Naive thymus-derived CD4-positive, alpha-beta T cell (primary cell): ENCODE measurements at regions of chr4 and their contacts with region 1.

Region 1: GRCh38 chr4:25312496-25313200 is at the start of gene ZCCHC4:
- DNase-seq: peak; percentile 83 to 99 (median 92)
- ATAC-seq: peak; percentile 100
- H3K4me3 ChIP-seq: peak within 1 kb of the TSS; percentile 80
- H3K4me3 Mint-ChIP-seq: peak within 1 kb of the TSS; percentile 91 to 100 (median 98)
- H3K27ac ChIP-seq: peak within 1 kb of the TSS; percentile 71
- H3K27ac Mint-ChIP-seq: peak within 1 kb of the TSS; percentile 90 to 98 (median 95)
- H3K4me1 ChIP-seq: peaks cover 5 to 7% of the 10 kb centered on the region in 2 donors
- H3K4me1 Mint-ChIP-seq: peaks cover 11 to 34% (median 29%) of the 10 kb centered on the region in 7 donors
- H3K27me3 ChIP-seq: no peaks in the 10 kb centered on the region
- H3K27me3 Mint-ChIP-seq: peaks cover 0 to 10% (median 4%) of the 10 kb centered on the region in 5 donors
- total RNA-seq, gene ZCCHC4: 9.5 to 15.5 (median 13.6) TPM

Region 2: GRCh38 chr4:25180524-25181131 is 132.0 kb before region 1 on chr4:
- CTCF ChIA-PET with region 1: interaction called, 3 read pairs
- POLR2A ChIA-PET with region 1: interaction called, 7 read pairs
- intact Hi-C with region 1: loop called in 1 of 2 experiments (anchors 1 kb)
- DNase-seq: peak in 5 of 9 donors; percentile 14 to 39 (median 26)
- ATAC-seq: peak; percentile 80
- H3K4me3 ChIP-seq: no peak overlapping the region
- H3K4me3 Mint-ChIP-seq: no peak overlapping the region
- H3K27ac ChIP-seq: no peak overlapping the region
- H3K27ac Mint-ChIP-seq: no peak overlapping the region
- H3K4me1 ChIP-seq: peaks cover 4 to 16% of the 10 kb centered on the region in 2 donors
- H3K4me1 Mint-ChIP-seq: peaks cover 22 to 63% (median 47%) of the 10 kb centered on the region in 7 donors
- H3K27me3 ChIP-seq: no peaks in the 10 kb centered on the region
- H3K27me3 Mint-ChIP-seq: no peaks in the 10 kb centered on the region

Region 3: GRCh38 chr4:25367004-25367621 is 54.5 kb after region 1 on chr4:
- CTCF ChIA-PET with region 1: no interaction called
- POLR2A ChIA-PET with region 1: no interaction called
- intact Hi-C with region 1: loop called (anchors 1 to 2 kb)
- DNase-seq: peak in 5 of 9 donors; percentile 18 to 37 (median 26)
- ATAC-seq: no peak
- H3K4me3 ChIP-seq: no peak overlapping the region
- H3K4me3 Mint-ChIP-seq: no peak overlapping the region
- H3K27ac ChIP-seq: no peak overlapping the region
- H3K27ac Mint-ChIP-seq: no peak overlapping the region
- H3K4me1 ChIP-seq: no peaks in the 10 kb centered on the region
- H3K4me1 Mint-ChIP-seq: no peaks in the 10 kb centered on the region
- H3K27me3 ChIP-seq: no peaks in the 10 kb centered on the region
- H3K27me3 Mint-ChIP-seq: no peaks in the 10 kb centered on the region

Region 4: DNA sequence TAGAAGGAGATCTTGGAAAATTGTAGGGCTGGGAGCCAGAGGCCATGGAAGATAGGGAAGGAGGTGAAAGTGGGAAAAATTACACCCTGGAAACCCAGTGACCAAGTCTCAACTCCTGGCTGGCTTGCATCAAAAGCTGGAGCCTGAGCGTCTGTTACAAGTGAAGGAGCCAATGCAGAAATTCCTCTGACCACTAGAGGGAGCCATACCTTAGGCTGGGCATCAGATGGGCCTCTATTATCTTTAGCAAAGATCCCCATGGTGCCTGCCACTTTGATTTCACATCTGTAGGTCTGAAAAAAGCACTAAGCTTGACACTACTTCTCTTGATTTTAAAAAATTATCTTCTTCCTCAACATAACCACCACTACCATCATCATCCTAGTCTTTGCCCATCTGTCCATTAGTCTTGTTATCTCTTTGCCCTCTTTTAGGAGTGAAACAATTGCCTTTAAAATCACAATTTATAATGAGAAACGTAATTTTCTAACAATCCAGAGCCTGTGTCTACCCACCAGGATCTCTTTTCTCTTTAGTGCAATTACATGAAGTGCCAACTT is 127.3 kb after region 1 on chr4:
- CTCF ChIA-PET with region 1: no interaction called
- POLR2A ChIA-PET with region 1: no interaction called
- intact Hi-C with region 1: no loop called
- DNase-seq: peak in 7 of 9 donors; percentile 18 to 44 (median 27)
- ATAC-seq: peak; percentile 72
- H3K4me3 ChIP-seq: no peak overlapping the region
- H3K4me3 Mint-ChIP-seq: no peak overlapping the region
- H3K27ac ChIP-seq: no peak overlapping the region
- H3K27ac Mint-ChIP-seq: no peak overlapping the region
- H3K4me1 ChIP-seq: no peaks in the 10 kb centered on the region
- H3K4me1 Mint-ChIP-seq: peaks cover 0 to 7% (median 0%) of the 10 kb centered on the region in 7 donors
- H3K27me3 ChIP-seq: no peaks in the 10 kb centered on the region
- H3K27me3 Mint-ChIP-seq: no peaks in the 10 kb centered on the region

Region 5: GRCh38 chr4:25489253-25489797 is 176.7 kb after region 1 on chr4:
- CTCF ChIA-PET with region 1: no interaction called
- POLR2A ChIA-PET with region 1: no interaction called
- intact Hi-C with region 1: no loop called
- DNase-seq: no peak
- ATAC-seq: no peak
- H3K4me3 ChIP-seq: no peak overlapping the region
- H3K4me3 Mint-ChIP-seq: no peak overlapping the region
- H3K27ac ChIP-seq: no peak overlapping the region
- H3K27ac Mint-ChIP-seq: no peak overlapping the region
- H3K4me1 ChIP-seq: no peaks in the 10 kb centered on the region
- H3K4me1 Mint-ChIP-seq: no peaks in the 10 kb centered on the region
- H3K27me3 ChIP-seq: no peaks in the 10 kb centered on the region
- H3K27me3 Mint-ChIP-seq: peaks cover 0 to 19% (median 12%) of the 10 kb centered on the region in 5 donors

Region 6: GRCh38 chr4:25852103-25852502 is 539.5 kb after region 1 on chr4:
- CTCF ChIA-PET with region 1: no interaction called
- POLR2A ChIA-PET with region 1: no interaction called
- intact Hi-C with region 1: no loop called
- DNase-seq: no peak
- ATAC-seq: no peak
- H3K4me3 ChIP-seq: no peak overlapping the region
- H3K4me3 Mint-ChIP-seq: no peak overlapping the region
- H3K27ac ChIP-seq: no peak overlapping the region
- H3K27ac Mint-ChIP-seq: peak overlapping the region in 1 of 9 donors; percentile 65
- H3K4me1 ChIP-seq: peaks cover 12 to 22% of the 10 kb centered on the region in 2 donors
- H3K4me1 Mint-ChIP-seq: peaks cover 40 to 64% (median 52%) of the 10 kb centered on the region in 7 donors
- H3K27me3 ChIP-seq: no peaks in the 10 kb centered on the region
- H3K27me3 Mint-ChIP-seq: no peaks in the 10 kb centered on the region

Region 7: DNA sequence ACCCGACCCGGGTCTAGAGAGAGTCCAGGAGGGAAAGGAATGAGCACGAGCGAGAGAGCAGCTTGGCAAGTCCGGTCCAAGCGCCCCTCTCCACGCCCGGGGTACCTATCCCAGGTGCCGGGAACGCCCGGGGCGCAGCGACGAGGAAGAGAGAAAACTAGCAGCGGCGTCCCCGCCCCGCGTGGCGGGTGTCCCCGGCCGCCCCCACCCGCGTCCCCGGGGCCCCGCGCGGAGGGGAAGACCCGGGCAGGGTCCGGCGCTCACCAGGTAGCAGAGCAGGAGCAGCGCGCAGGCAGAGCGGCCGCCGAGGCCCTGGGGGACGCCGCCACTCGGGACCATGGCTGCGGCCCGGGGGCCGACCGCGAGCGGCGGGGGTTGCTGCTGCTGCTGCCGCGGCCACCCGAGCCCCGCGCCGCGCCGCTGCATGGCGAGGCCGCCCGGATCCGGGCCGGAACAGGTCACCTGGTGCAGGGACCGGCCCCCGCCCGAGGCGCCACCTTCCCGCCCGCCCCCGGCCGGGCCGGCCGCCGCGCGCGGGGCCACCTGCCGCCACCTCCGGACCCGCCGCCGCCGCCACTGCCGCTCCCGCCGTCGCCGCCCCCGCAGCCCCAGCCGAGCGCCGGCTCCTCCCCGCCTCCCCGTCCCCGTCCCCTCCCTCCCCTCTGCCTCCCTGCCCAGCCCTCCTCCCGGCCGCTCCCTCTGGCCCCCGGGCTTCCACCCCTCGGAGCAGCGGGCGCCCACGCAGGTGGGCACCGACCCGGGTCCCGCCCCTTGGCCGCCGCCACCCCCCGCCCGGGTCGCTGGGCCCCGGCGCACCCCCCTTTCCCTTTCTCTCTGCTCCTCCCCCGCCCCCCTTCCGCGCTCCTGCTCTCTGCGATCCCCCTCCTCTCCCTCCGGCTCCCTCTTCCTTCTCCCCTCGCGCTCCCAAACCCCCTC is 550.0 kb after region 1 on chr4 and contains the start of gene SEL1L3:
- CTCF ChIA-PET with region 1: no interaction called
- POLR2A ChIA-PET with region 1: no interaction called
- intact Hi-C with region 1: loop called in 1 of 2 experiments (anchors 1 kb)
- DNase-seq: peak in 8 of 9 donors; percentile 13 to 77 (median 29)
- ATAC-seq: peak; percentile 59
- H3K4me3 ChIP-seq: peak within 1 kb of the TSS; percentile 68
- H3K4me3 Mint-ChIP-seq: peak within 1 kb of the TSS; percentile 94 to 100 (median 98)
- H3K27ac ChIP-seq: peak within 1 kb of the TSS; percentile 71
- H3K27ac Mint-ChIP-seq: peak within 1 kb of the TSS; percentile 88 to 99 (median 96)
- H3K4me1 ChIP-seq: peaks cover 30 to 32% of the 10 kb centered on the region in 2 donors
- H3K4me1 Mint-ChIP-seq: peaks cover 32 to 44% (median 39%) of the 10 kb centered on the region in 7 donors
- H3K27me3 ChIP-seq: no peaks in the 10 kb centered on the region
- H3K27me3 Mint-ChIP-seq: peaks cover 0 to 3% (median 0%) of the 10 kb centered on the region in 5 donors
- total RNA-seq, gene SEL1L3: 38.1 to 55.8 (median 47.0) TPM